B cell (primary cell): ENCODE measurements at regions of chr1 and their contacts with region 1.

Region 1: GRCh38 chr1:25549273-25550154 is 6.1 kb downstream of the LDLRAP1 start:
- DNase-seq: peak; percentile 78
- ATAC-seq: peak; percentile 98
- H3K4me3 ChIP-seq: peak overlapping the region in 3 of 5 experiments; percentile 11 to 34 (median 34)
- H3K4me3 Mint-ChIP-seq: peak overlapping the region; percentile 79
- H3K27ac ChIP-seq: peak overlapping the region; percentile 42 to 70
- H3K27ac Mint-ChIP-seq: peak overlapping the region; percentile 92
- H3K4me1 ChIP-seq: peaks cover 36 to 48% of the 10 kb centered on the region in 2 donors
- H3K4me1 Mint-ChIP-seq: peaks cover 52% of the 10 kb centered on the region
- H3K27me3 ChIP-seq: peaks cover 0 to 6% (median under 1%) of the 10 kb centered on the region in 4 experiments
- H3K27me3 Mint-ChIP-seq: no peaks in the 10 kb centered on the region
- CTCF ChIP-seq: no peak

Region 2: DNA sequence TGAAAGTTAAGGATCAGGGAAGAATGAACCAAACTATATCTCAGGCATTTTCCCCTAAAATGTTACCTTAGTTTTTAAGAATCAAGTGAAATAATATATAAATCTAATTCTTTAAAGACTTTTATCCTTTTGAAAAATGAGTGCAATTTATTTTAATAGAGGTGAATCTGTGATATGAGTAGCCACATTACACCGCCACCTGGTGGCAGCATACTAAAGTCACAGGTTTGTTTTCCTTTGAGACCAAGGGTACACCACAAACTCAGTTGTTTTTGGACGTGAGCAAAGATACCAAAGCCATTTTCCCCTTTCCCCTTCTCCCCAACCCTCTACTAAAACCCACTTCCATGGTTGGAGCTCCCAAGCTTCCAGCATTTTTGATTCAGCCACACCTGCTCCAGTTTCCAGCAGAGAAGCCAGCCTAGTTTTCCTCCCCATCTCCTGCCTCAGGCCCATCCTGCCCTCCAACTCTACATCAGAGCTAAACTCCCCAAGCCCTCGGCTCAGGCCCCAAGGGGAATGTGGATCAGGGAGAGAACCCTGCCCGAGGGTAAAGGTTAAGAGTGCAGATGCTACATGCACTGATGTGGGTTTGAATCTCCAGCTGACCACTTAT is 29.0 kb before region 1 on chr1:
- CTCF ChIA-PET with region 1: interaction called, 16 read pairs
- POLR2A ChIA-PET with region 1: no interaction called
- intact Hi-C with region 1: no loop called
- DNase-seq: peak; percentile 71
- ATAC-seq: peak; percentile 45
- H3K4me3 ChIP-seq: no peak overlapping the region
- H3K4me3 Mint-ChIP-seq: no peak overlapping the region
- H3K27ac ChIP-seq: no peak overlapping the region
- H3K27ac Mint-ChIP-seq: no peak overlapping the region
- H3K4me1 ChIP-seq: no peaks in the 10 kb centered on the region
- H3K4me1 Mint-ChIP-seq: no peaks in the 10 kb centered on the region
- H3K27me3 ChIP-seq: peaks cover 0 to 5% (median 0%) of the 10 kb centered on the region in 4 experiments
- H3K27me3 Mint-ChIP-seq: peaks cover 9% of the 10 kb centered on the region
- CTCF ChIP-seq: peak; percentile 86

Region 3: DNA sequence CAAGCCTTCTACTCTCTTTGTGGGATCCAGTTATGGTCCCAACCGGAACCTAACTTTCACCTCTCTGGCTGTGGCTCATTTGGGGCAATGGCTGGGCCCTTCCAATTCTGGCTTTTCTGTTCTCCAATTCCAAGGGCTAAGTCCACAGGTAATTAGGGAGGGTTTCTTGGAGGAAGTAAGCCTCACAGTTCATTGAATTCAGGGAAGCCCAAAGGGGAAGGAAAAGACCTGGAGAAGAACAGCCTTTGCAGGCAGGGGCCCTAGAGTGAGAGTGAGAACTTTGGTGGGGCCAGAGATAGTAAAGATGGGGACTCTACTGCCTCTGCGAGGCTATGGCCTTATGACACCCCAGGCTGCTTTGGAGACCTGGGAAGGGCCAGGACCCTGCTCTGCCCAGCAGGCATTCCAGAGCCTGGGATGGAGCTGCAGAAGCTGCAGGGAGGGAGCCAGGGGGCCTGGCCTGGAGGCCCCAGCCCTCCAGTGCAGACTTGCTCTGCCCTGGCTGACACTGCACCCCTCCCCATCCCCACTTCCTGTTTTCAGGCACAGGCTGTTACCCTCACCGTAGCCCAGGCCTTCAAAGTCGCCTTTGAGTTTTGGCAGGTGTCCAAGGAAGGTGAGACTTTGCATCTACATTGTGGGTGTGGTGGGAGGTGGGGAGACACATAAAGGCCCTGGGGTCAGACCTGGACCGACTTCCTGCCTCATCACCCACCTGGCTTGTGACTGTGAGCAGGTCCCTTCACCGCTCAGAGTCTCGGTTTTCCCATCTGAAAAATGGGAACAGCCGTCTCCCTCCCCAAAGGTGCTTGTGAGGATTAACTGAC is 12.8 kb after region 1 on chr1:
- CTCF ChIA-PET with region 1: interaction called, 12 read pairs
- POLR2A ChIA-PET with region 1: interaction called, 3 read pairs
- intact Hi-C with region 1: loop called (anchors 1 kb)
- DNase-seq: peak; percentile 81
- ATAC-seq: peak; percentile 94
- H3K4me3 ChIP-seq: peak overlapping the region in 1 of 5 experiments; percentile 34
- H3K4me3 Mint-ChIP-seq: peak overlapping the region; percentile 44
- H3K27ac ChIP-seq: peak overlapping the region; percentile 63 to 67
- H3K27ac Mint-ChIP-seq: peak overlapping the region; percentile 91
- H3K4me1 ChIP-seq: peaks cover 52 to 53% of the 10 kb centered on the region in 2 donors
- H3K4me1 Mint-ChIP-seq: peaks cover 61% of the 10 kb centered on the region
- H3K27me3 ChIP-seq: no peaks in the 10 kb centered on the region
- H3K27me3 Mint-ChIP-seq: no peaks in the 10 kb centered on the region
- CTCF ChIP-seq: no peak

Region 4: GRCh38 chr1:25590096-25590824 is 40.7 kb after region 1 on chr1:
- CTCF ChIA-PET with region 1: no interaction called
- POLR2A ChIA-PET with region 1: no interaction called
- intact Hi-C with region 1: no loop called
- DNase-seq: no peak
- ATAC-seq: no peak
- H3K4me3 ChIP-seq: no peak overlapping the region
- H3K4me3 Mint-ChIP-seq: no peak overlapping the region
- H3K27ac ChIP-seq: no peak overlapping the region
- H3K27ac Mint-ChIP-seq: no peak overlapping the region
- H3K4me1 ChIP-seq: peaks cover 11 to 13% of the 10 kb centered on the region in 2 donors
- H3K4me1 Mint-ChIP-seq: peaks cover 21% of the 10 kb centered on the region
- H3K27me3 ChIP-seq: no peaks in the 10 kb centered on the region
- H3K27me3 Mint-ChIP-seq: peaks cover 20% of the 10 kb centered on the region
- CTCF ChIP-seq: no peak

Region 5: DNA sequence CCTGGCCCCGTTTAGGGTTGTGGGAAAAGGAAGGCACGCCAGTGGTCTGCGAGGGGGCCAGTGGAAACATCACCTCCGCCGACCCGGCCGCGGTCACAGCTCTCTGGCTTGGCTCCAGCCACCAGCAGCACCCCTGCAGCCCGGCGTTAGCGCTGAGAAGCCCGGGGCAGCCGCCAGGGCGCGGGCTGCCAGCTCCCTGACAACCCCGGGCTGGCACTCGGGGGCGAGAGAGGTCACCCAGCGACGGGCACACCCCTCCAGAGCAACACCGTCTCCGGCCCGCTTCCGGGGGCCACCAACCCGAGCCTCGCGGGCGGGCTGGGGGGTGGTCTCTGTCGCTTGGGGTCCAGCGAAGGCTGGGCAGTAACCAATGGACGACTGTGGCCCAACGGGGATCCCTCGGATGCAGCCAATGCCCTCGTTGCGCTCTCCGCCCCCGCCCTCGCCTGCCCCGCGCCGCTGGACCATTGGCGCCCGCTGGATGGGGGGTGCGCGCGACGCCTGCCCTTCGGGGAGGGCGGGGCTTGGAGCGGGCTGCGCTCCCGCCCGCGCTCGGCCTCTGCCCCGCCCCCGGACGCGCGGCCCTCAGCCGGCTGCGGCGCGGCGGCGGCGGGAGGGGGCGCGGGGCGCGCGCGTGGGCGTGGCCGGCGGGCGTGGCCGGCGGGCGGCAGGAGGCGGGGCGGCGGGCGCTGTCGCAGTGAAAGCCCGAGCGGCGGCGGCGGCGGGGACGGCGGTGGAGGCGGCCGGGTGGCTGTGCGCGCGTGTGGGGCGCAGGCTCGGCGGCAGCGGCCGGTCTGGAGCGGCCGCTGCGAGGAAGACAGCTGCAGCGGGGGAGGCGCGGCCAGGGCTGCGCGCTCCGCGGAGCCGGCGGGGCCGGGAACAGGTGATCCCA is 66.8 kb after region 1 on chr1 and contains the start of gene MAN1C1:
- CTCF ChIA-PET with region 1: interaction called, 8 read pairs
- POLR2A ChIA-PET with region 1: no interaction called
- intact Hi-C with region 1: loop called (anchors 2 kb)
- DNase-seq: peak; percentile 88
- ATAC-seq: peak; percentile 92
- H3K4me3 ChIP-seq: peak within 1 kb of the TSS in 4 of 5 experiments; percentile 69 to 78 (median 74)
- H3K4me3 Mint-ChIP-seq: peak within 1 kb of the TSS; percentile 87
- H3K27ac ChIP-seq: no peak within 1 kb of the TSS
- H3K27ac Mint-ChIP-seq: peak within 1 kb of the TSS; percentile 69
- H3K4me1 ChIP-seq: peaks cover 8 to 22% of the 10 kb centered on the region in 2 donors
- H3K4me1 Mint-ChIP-seq: peaks cover 23% of the 10 kb centered on the region
- H3K27me3 ChIP-seq: peaks cover 0 to 45% (median 24%) of the 10 kb centered on the region in 4 experiments
- H3K27me3 Mint-ChIP-seq: peaks cover 43% of the 10 kb centered on the region
- CTCF ChIP-seq: peak; percentile 38
- total RNA-seq, gene MAN1C1: 0.70 and 0.89 TPM in 2 replicates

Region 6: DNA sequence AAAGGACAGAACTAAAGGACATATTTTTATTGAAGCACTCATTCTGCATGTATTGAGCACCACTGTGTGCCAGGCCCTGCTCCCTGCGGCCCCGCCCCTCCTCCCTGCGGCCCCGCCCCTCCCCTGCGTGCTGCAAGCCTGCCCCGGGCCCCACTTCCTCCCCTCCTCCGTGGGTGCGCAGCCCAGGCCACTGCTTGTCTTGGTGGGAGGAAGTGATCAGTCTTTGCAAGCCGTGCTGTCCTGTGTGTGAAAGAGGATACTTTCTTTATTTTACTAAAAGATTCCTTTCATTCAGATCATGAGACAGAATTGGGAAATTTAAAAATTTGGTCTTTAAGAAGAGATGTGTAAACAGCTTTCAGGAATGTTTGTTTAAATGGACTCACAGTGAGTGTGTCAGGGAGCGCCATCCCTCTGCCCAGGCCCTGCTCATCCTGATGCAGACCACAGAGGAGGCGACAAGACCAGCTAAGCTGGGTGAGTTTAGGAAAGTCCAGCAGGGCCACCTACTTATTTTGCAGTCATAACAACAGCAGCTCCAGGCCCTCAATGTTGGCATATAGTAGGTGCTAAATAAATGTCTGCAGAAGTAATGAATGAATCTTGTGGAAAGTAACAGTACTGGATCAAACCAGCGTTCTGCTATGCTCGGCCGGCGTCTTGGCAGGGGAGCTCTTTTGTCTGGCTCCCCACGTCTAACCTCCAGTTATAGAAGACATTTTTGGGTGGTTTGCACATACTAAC is 162.2 kb after region 1 on chr1:
- CTCF ChIA-PET with region 1: no interaction called
- POLR2A ChIA-PET with region 1: no interaction called
- intact Hi-C with region 1: no loop called
- DNase-seq: no peak
- ATAC-seq: peak; percentile 64
- H3K4me3 ChIP-seq: no peak overlapping the region
- H3K4me3 Mint-ChIP-seq: no peak overlapping the region
- H3K27ac ChIP-seq: no peak overlapping the region
- H3K27ac Mint-ChIP-seq: no peak overlapping the region
- H3K4me1 ChIP-seq: peaks cover 0 to 4% of the 10 kb centered on the region in 2 donors
- H3K4me1 Mint-ChIP-seq: peaks cover 9% of the 10 kb centered on the region
- H3K27me3 ChIP-seq: peaks cover 0 to 2% (median 0%) of the 10 kb centered on the region in 4 experiments
- H3K27me3 Mint-ChIP-seq: no peaks in the 10 kb centered on the region
- CTCF ChIP-seq: no peak